MCF 10A (cell line): ENCODE measurements at regions of chr2 and their contacts with region 1.

Region 1: DNA sequence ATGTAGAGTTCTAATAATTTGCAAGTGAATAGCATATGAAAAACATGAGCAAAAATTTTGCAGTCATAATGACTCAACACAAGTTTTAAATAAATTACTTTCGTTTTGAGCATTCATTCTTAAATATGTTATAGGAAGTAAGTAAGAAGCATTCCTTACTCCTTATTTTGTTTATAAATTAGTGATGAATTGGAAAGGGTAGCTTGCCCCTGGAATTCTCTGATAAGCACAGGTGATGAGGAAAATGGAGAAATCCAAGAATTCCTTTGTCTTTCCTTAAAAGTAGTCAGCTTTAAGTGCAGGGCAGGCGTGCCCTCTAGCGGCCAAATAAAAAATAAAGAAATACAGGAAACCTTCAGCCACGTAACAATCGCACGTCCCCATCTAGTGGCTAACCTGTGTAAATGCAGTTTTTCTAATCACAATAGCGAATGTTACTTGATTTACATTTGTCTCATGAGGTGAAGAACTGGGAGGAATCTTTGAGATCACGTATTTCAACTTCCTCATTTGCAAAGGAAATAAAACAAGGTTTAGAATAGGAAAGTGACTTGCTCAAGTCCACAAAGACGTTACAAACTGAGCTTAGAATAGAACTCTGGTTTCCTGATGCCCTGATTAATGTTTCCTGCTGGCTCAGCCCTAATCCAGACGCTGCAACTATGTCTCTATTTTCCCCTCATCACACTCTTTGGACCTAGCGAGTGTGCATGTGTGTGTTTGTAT is 47.2 kb upstream of the ZNG1B start:
- DNase-seq: peak; percentile 78
- H3K4me3 Mint-ChIP-seq: no peak overlapping the region
- H3K27ac Mint-ChIP-seq: no peak overlapping the region
- H3K4me1 Mint-ChIP-seq: no peaks in the 10 kb centered on the region
- H3K27me3 Mint-ChIP-seq: no peaks in the 10 kb centered on the region
- CTCF ChIP-seq: peak; percentile 85

Region 2: GRCh38 chr2:113203901-113204519 is 186.3 kb before region 1 on chr2:
- CTCF ChIA-PET with region 1: interaction called, 74 read pairs
- POLR2A ChIA-PET with region 1: interaction called, 7 read pairs
- intact Hi-C with region 1: loop called (anchors 2 kb)
- DNase-seq: peak; percentile 81
- H3K4me3 Mint-ChIP-seq: no peak overlapping the region
- H3K27ac Mint-ChIP-seq: peak overlapping the region; percentile 25
- H3K4me1 Mint-ChIP-seq: peaks cover 12% of the 10 kb centered on the region
- H3K27me3 Mint-ChIP-seq: no peaks in the 10 kb centered on the region
- CTCF ChIP-seq: peak; percentile 92

Region 3: GRCh38 chr2:113248997-113249770 is 141.1 kb before region 1 on chr2:
- CTCF ChIA-PET with region 1: interaction called, 46 read pairs
- POLR2A ChIA-PET with region 1: interaction called, 4 read pairs
- intact Hi-C with region 1: loop called (anchors 5 kb)
- DNase-seq: peak; percentile 86
- H3K4me3 Mint-ChIP-seq: no peak overlapping the region
- H3K27ac Mint-ChIP-seq: no peak overlapping the region
- H3K4me1 Mint-ChIP-seq: peaks cover 15% of the 10 kb centered on the region
- H3K27me3 Mint-ChIP-seq: no peaks in the 10 kb centered on the region
- CTCF ChIP-seq: peak; percentile 92

Region 4: GRCh38 chr2:113370478-113371091 is 19.7 kb before region 1 on chr2:
- CTCF ChIA-PET with region 1: interaction called, 15 read pairs
- POLR2A ChIA-PET with region 1: no interaction called
- intact Hi-C with region 1: no loop called
- DNase-seq: peak; percentile 80
- H3K4me3 Mint-ChIP-seq: no peak overlapping the region
- H3K27ac Mint-ChIP-seq: no peak overlapping the region
- H3K4me1 Mint-ChIP-seq: peaks cover 7% of the 10 kb centered on the region
- H3K27me3 Mint-ChIP-seq: no peaks in the 10 kb centered on the region
- CTCF ChIP-seq: peak; percentile 76

Region 5: GRCh38 chr2:113826346-113827285 is 436.3 kb after region 1 on chr2:
- CTCF ChIA-PET with region 1: no interaction called
- POLR2A ChIA-PET with region 1: no interaction called
- intact Hi-C with region 1: no loop called
- DNase-seq: no peak
- H3K4me3 Mint-ChIP-seq: no peak overlapping the region
- H3K27ac Mint-ChIP-seq: no peak overlapping the region
- H3K4me1 Mint-ChIP-seq: no peaks in the 10 kb centered on the region
- H3K27me3 Mint-ChIP-seq: no peaks in the 10 kb centered on the region
- CTCF ChIP-seq: no peak